HEK293 (cell line): ENCODE measurements at regions of chr2 and their contacts with region 1.

Region 1: DNA sequence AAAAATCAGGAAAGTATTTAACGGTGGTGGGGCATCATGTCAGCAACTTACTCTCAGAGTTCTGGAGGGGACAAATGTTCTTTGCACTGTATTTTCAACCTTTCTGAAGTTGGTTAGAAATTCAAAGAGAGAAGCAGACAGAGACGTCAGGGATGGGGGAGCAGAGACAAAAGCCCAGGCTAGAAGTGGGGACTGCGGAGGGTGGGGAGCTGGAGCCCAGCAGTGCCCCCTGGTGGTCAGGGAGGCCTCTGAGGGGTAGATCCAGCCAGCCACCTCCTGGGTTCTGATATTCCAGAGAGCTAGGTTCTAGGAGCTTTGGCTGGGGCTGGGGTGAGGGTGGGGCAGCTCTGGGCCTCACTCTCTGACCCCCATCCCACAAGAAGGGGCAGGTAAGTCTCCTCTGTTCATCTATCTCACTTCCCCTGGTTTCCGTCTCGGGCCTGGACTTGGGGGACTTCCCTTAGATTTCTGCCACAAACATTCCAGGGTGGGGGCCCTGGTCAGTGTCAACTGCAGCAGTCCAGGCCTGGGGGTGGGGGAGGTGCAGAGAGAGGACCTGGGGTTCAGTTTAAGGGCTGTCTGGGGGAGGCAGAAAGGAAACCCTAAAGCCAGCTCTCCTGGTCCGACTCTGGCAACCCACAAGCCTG is 8.9 kb downstream of the TNS1 start:
- H3K4me3 ChIP-seq: no peak overlapping the region
- H3K27ac ChIP-seq: no peak overlapping the region
- H3K4me1 ChIP-seq: peaks cover 4% of the 10 kb centered on the region; the same call in 1 of the 2 replicates
- CTCF ChIP-seq: peak; percentile 71

Region 2: DNA sequence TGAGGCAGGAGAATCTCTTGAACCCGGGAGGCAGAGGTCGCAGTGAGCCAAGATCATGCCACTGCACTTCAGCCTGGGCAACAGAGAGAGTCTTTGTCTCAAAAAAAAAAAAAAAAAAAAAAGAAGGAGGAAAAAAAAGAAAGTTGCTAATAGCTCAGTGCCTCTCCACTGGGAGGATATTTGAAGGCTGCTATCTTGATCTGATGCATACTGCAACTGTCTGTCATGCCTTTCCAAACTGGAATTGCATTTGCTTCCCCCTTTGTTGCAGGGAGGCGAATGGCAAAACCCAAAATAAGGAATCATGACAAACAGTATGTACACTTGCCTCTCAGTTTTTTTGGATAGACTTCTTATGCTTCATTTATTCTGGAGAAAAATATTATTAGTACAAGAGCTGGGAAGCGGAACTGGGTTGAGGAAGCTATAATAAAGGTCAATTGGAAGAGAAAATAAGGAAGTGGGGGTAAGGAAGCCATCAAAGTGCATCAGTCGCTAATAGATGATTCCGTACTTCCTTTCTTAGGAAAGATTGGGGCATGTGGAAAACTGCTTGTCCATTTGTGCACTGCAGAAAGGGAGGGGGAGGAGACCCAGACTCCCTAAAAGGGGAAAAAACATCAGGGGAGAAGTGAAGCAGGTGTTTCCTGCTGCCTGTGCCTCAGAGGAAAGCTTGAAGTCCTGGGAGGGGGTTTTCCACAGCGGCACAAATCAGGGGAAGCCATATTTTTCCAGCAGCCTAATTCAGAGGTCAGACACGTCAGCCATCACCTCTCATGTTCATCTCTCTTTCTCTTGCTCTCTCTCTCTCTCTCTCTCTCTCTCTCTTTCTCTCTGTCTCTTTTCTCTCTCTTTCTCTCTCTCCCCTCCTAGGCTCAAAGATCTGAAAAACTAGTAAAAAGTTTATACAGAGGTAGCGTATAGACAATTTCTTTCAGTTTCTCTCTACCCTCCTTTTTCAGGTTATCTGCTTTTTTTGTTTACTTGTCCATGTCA is 832.7 kb before region 1 on chr2:
- CTCF ChIA-PET with region 1: no interaction called
- POLR2A ChIA-PET with region 1: no interaction called
- H3K4me3 ChIP-seq: no peak overlapping the region
- H3K27ac ChIP-seq: no peak overlapping the region
- H3K4me1 ChIP-seq: peaks cover 10% of the 10 kb centered on the region
- CTCF ChIP-seq: no peak

Region 3: DNA sequence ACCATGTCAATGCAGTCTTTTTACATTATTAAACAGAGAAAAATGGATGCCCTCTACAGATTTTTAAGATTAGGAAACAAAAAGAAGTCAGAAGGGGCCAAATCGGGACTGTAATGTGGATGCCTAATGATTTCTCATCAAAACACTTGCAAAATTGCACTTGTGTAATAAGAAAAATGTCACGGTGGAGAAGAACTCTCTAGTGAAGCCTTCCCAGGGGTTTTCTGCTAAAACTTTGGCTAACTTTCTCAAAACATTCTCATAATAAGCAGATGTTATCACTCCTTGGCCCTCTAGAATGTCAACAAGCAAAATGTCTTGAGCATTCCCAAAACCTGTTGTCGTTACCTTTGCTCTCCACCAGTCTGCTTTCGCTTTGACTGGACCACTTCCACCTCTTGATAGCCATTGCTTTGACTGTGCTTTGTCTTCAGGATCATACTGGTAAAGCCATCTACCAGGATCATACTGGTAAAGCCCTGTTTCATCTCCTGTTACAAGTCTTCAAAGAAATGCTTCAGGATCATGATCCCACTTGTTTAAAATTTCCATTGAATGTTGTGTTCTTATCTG is 217.9 kb before region 1 on chr2:
- CTCF ChIA-PET with region 1: interaction called, 11 read pairs
- POLR2A ChIA-PET with region 1: no interaction called
- H3K4me3 ChIP-seq: no peak overlapping the region
- H3K27ac ChIP-seq: no peak overlapping the region
- H3K4me1 ChIP-seq: no peaks in the 10 kb centered on the region
- CTCF ChIP-seq: no peak

Region 4: DNA sequence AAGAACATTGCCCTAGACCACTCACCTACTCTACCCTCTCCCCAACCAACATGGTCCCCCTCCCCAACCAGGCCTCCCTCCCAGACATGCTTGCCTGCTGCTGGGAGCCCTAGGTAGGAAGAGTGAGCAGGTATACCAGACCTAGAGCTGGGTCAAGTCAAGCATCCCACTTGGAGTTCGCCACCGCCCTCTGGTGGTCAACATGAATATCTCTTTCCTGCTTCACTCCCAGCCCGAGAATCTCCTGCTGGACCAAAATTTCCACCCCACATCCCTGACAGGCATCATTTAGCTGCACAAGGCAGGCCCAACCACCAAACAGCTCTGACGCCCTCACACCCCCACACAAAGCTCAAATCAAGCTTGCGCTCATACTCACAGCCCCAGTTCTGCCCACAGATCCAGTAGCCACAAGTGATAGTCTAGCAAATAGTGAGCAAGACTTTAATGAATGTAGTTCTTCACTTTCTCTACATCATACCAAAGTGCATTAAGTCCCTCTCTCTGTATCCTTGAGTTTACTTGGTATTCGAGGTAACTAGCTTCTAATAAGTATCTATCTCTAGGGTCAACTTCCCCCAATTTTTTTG is 107.1 kb before region 1 on chr2:
- CTCF ChIA-PET with region 1: interaction called, 16 read pairs
- POLR2A ChIA-PET with region 1: no interaction called
- H3K4me3 ChIP-seq: no peak overlapping the region
- H3K27ac ChIP-seq: no peak overlapping the region
- H3K4me1 ChIP-seq: no peaks in the 10 kb centered on the region
- CTCF ChIP-seq: peak; percentile 76

Region 5: DNA sequence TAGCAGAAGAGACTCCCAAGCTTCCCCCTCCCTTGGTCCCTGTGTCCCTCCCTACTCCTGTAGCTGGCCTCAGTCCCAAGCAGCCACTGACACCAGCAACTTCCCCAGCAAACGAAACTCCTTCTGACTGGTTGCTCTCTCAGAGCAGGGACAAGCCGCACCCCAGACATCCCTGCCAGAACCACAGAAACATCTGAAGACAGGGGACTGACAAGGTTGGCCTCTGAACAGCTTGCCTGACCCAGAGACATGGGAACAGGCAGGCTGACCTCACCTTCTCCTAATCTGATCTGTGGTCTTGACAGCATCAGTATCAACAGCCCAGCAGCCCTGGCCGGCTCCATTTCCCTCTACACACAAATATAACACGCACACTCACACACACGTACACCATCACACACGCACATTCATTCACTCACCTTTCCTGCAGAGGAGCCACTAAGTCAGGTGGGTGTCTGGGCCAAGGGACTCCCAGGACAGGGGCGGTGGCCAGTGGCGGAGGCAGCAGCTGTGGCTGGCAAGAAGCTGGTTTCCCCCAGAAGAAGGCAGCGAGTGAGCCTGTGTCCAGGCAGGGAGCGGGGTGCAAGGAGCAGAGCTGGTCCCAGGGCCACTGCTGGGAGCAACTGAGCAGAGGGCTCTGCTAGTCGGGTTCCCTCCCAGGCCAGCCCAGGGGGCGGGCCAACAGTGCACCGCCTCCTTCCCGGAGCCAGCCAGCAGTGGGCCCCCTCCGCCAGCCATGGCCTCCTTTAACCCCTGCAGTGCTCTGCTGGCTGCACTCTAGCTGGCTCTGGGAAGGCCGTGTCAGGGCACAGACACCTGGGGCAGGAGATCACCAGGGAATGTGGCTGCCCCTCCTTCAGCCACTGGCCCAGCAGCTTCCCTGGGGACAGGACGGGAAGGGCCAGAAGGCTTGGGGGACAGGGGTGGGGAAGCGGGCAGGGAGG is 50.2 kb before region 1 on chr2:
- CTCF ChIA-PET with region 1: interaction called, 11 read pairs
- POLR2A ChIA-PET with region 1: no interaction called
- H3K4me3 ChIP-seq: no peak overlapping the region
- H3K27ac ChIP-seq: no peak overlapping the region
- H3K4me1 ChIP-seq: peaks cover 4% of the 10 kb centered on the region
- CTCF ChIP-seq: peak; percentile 50; the same call in 1 of the 2 replicates

Region 6: GRCh38 chr2:218033590-218034496 is 39.9 kb after region 1 on chr2:
- CTCF ChIA-PET with region 1: interaction called, 10 read pairs
- POLR2A ChIA-PET with region 1: no interaction called
- H3K4me3 ChIP-seq: no peak overlapping the region
- H3K27ac ChIP-seq: no peak overlapping the region
- H3K4me1 ChIP-seq: no peaks in the 10 kb centered on the region
- CTCF ChIP-seq: no peak

Region 7: DNA sequence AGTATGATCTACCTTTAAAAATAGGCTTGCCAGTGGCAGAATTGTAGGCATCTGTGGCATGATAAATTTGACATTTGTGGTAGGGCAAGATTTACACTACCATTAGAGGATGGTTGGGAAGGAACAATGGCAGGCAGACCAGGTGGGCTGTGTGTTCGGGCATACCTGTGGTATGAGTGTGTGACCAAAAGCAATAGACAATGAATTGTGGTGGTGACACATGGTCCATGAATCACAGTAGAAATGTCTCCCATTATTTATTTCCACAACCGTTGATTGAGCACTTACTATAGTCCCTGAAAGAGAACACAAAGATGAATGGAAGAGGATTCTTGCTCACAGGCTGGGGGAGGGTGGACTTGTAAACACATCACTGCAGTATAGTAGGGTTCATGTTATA is 45.2 kb after region 1 on chr2:
- CTCF ChIA-PET with region 1: interaction called, 17 read pairs
- POLR2A ChIA-PET with region 1: no interaction called
- H3K4me3 ChIP-seq: no peak overlapping the region
- H3K27ac ChIP-seq: no peak overlapping the region
- H3K4me1 ChIP-seq: no peaks in the 10 kb centered on the region
- CTCF ChIP-seq: no peak